GM10248 (cell line): ENCODE measurements at regions of chr18 and their contacts with region 1.

Region 1: GRCh38 chr18:45879681-45880655 is 54.5 kb downstream of the SIGLEC15 start:
- DNase-seq: peak; percentile 79
- CTCF ChIP-seq: peak; percentile 99

Region 2: GRCh38 chr18:45670281-45670962 is 209.5 kb before region 1 on chr18:
- CTCF ChIA-PET with region 1: interaction called, 117 read pairs
- POLR2A ChIA-PET with region 1: no interaction called
- DNase-seq: peak; percentile 33
- CTCF ChIP-seq: no peak

Region 3: DNA sequence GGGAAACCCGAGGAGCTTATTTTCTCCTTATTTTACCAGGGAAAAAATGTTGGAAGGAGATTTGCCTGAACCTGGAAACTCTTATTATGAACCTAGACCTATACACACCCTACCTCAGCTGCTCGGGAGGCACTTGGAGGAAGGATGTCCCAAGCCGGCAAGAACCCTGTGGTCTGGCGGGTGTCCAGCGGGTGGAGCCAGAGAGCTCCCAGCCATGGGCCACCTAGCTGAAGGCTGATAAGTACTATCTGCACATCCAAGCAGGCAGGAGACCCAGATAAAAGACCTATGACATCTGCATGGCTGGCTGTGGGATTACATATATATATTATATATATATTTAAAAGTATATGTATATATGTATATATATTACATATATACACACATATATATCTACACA is 157.1 kb before region 1 on chr18:
- CTCF ChIA-PET with region 1: interaction called, 106 read pairs
- POLR2A ChIA-PET with region 1: no interaction called
- DNase-seq: peak; percentile 80
- CTCF ChIP-seq: peak; percentile 82

Region 4: GRCh38 chr18:45856531-45856930 is 23.4 kb before region 1 on chr18:
- CTCF ChIA-PET with region 1: interaction called, 24 read pairs
- POLR2A ChIA-PET with region 1: no interaction called
- DNase-seq: no peak
- CTCF ChIP-seq: no peak

Region 5: GRCh38 chr18:45890606-45891005 is 10.6 kb after region 1 on chr18:
- CTCF ChIA-PET with region 1: interaction called, 65 read pairs
- POLR2A ChIA-PET with region 1: no interaction called
- DNase-seq: no peak
- CTCF ChIP-seq: no peak

Region 6: DNA sequence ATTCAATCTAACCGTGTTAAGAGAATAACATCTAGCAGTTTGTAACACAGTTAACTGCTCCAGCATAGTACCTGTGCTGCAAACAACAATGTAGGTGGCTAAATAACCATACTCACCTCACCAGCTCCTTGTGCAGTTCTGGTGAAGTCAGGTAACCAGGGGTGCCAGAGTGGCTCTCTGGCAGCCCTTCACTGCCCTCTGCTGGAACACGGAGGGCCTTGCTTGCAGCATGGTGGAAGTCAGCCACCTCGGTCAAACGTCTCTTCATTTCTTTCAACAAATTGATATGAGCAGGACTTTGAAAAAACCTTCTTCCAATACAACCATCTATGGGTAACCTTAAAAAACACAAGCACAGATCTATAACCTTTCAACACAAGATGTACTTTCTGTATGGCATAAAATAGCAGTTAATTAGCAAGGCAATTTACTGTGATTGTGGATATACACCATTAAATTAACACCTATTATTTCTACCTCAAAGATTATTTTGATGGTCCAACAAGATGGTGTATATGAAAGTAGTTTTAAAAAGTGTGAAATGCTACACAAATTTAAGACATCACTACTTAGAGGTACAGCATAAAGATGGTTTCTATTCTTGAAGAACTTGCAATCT is 30.5 kb after region 1 on chr18:
- CTCF ChIA-PET with region 1: interaction called, 26 read pairs
- POLR2A ChIA-PET with region 1: no interaction called
- DNase-seq: peak; percentile 66
- CTCF ChIP-seq: peak; percentile 69

Region 7: GRCh38 chr18:46182633-46183358 is 302.8 kb after region 1 on chr18:
- CTCF ChIA-PET with region 1: no interaction called
- POLR2A ChIA-PET with region 1: no interaction called
- DNase-seq: no peak
- CTCF ChIP-seq: no peak

Region 8: GRCh38 chr18:46301081-46301480 is 421.1 kb after region 1 on chr18:
- CTCF ChIA-PET with region 1: no interaction called
- POLR2A ChIA-PET with region 1: no interaction called
- DNase-seq: no peak
- CTCF ChIP-seq: no peak